Naive thymus-derived CD4-positive, alpha-beta T cell (primary cell): ENCODE measurements at regions of chr1 and their contacts with region 1.

Region 1: GRCh38 chr1:32063261-32063681 is 9.5 kb upstream of the TMEM39B start:
- DNase-seq: peak in 6 of 9 donors; percentile 12 to 46 (median 35)
- ATAC-seq: peak; percentile 60
- H3K4me3 ChIP-seq: no peak overlapping the region
- H3K4me3 Mint-ChIP-seq: no peak overlapping the region
- H3K27ac ChIP-seq: no peak overlapping the region
- H3K27ac Mint-ChIP-seq: peak overlapping the region in 8 of 9 donors; percentile 8 to 79 (median 68)
- H3K4me1 ChIP-seq: peaks cover 4 to 5% of the 10 kb centered on the region in 2 donors
- H3K4me1 Mint-ChIP-seq: peaks cover 10 to 19% (median 12%) of the 10 kb centered on the region in 7 donors
- H3K27me3 ChIP-seq: no peaks in the 10 kb centered on the region
- H3K27me3 Mint-ChIP-seq: no peaks in the 10 kb centered on the region

Region 2: GRCh38 chr1:31715087-31715872 is 348.0 kb before region 1 on chr1:
- CTCF ChIA-PET with region 1: no interaction called
- POLR2A ChIA-PET with region 1: no interaction called
- intact Hi-C with region 1: loop called in 1 of 2 experiments (anchors 1 kb)
- DNase-seq: peak in 1 of 9 donors; percentile 45
- ATAC-seq: peak; percentile 66
- H3K4me3 ChIP-seq: peak overlapping the region; percentile 13
- H3K4me3 Mint-ChIP-seq: peak overlapping the region; percentile 42 to 83 (median 73)
- H3K27ac ChIP-seq: no peak overlapping the region
- H3K27ac Mint-ChIP-seq: no peak overlapping the region
- H3K4me1 ChIP-seq: peaks cover 3 to 16% of the 10 kb centered on the region in 2 donors
- H3K4me1 Mint-ChIP-seq: peaks cover 6 to 19% (median 16%) of the 10 kb centered on the region in 7 donors
- H3K27me3 ChIP-seq: peaks cover 2 to 10% of the 10 kb centered on the region in 2 donors
- H3K27me3 Mint-ChIP-seq: peaks cover 59 to 71% (median 64%) of the 10 kb centered on the region in 5 donors

Region 3: DNA sequence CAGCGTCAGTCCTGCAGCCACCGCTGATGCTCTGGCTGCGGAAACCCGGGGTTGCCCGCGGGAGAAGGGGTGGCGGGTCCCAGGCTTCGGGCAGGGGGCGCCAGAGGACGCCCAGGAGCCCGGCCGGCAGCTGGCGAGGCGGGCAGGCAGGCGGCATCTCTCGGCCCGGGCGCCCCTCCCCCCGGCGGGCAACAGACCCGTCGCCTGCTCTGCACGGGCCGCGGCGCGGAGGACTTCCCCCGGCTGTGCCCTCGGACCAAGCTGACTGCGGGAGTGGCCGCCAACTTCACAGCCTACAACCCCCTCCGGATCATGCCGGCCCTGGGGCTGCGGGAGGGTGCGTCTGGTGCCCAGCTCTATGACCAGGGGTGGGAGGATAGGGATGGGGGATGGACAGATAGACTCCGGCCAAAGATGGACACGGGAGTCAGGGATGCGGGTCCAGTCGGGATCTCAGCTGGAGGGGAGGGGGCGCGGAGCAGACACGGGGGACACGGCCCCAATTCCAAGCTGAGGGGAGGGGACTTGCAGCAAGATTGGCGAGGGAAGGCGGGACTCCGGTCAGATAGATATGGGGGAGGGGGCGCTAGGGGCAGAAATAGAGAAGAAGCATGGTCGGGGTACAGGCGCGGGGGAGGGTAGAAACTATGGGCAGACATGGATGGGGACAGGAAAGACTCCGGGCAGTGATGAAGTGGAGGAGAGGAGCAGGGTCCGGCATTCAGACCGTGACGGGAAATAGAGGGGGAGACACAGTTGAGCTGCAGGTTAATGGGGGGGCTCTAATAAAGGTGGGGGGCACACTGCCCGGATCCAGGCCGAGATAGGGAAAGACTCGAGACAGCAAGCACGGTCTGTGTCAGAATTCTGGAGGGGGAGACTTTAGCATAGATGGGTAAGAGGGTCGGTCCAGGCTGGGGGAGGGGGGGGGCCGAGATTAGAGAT is 300.3 kb before region 1 on chr1:
- CTCF ChIA-PET with region 1: interaction called, 3 read pairs
- POLR2A ChIA-PET with region 1: no interaction called
- intact Hi-C with region 1: loop called (anchors 1 kb)
- DNase-seq: peak; percentile 51 to 81 (median 67)
- ATAC-seq: peak; percentile 64
- H3K4me3 ChIP-seq: peak overlapping the region; percentile 48
- H3K4me3 Mint-ChIP-seq: peak overlapping the region; percentile 71 to 89 (median 82)
- H3K27ac ChIP-seq: no peak overlapping the region
- H3K27ac Mint-ChIP-seq: no peak overlapping the region
- H3K4me1 ChIP-seq: peaks cover 23 to 32% of the 10 kb centered on the region in 2 donors
- H3K4me1 Mint-ChIP-seq: peaks cover 6 to 32% (median 26%) of the 10 kb centered on the region in 7 donors
- H3K27me3 ChIP-seq: no peaks in the 10 kb centered on the region
- H3K27me3 Mint-ChIP-seq: peaks cover 0 to 79% (median 4%) of the 10 kb centered on the region in 5 donors

Region 4: GRCh38 chr1:31815752-31816500 is 247.3 kb before region 1 on chr1 and contains the start of gene SPOCD1:
- CTCF ChIA-PET with region 1: interaction called, 10 read pairs
- POLR2A ChIA-PET with region 1: no interaction called
- intact Hi-C with region 1: loop called (anchors 1 to 10 kb)
- DNase-seq: peak; percentile 71 to 86 (median 78)
- ATAC-seq: peak; percentile 98
- H3K4me3 ChIP-seq: no peak within 1 kb of the TSS
- H3K4me3 Mint-ChIP-seq: peak within 1 kb of the TSS in 2 of 10 donors; percentile 18 to 41
- H3K27ac ChIP-seq: no peak within 1 kb of the TSS
- H3K27ac Mint-ChIP-seq: peak within 1 kb of the TSS; percentile 33 to 81 (median 48)
- H3K4me1 ChIP-seq: peaks cover 0 to 7% of the 10 kb centered on the region in 2 donors
- H3K4me1 Mint-ChIP-seq: peaks cover 6 to 24% (median 13%) of the 10 kb centered on the region in 7 donors
- H3K27me3 ChIP-seq: no peaks in the 10 kb centered on the region
- H3K27me3 Mint-ChIP-seq: no peaks in the 10 kb centered on the region
- total RNA-seq, gene SPOCD1: 0.21 to 0.38 TPM in 2 of 5 experiments, not detected in the others

Region 5: DNA sequence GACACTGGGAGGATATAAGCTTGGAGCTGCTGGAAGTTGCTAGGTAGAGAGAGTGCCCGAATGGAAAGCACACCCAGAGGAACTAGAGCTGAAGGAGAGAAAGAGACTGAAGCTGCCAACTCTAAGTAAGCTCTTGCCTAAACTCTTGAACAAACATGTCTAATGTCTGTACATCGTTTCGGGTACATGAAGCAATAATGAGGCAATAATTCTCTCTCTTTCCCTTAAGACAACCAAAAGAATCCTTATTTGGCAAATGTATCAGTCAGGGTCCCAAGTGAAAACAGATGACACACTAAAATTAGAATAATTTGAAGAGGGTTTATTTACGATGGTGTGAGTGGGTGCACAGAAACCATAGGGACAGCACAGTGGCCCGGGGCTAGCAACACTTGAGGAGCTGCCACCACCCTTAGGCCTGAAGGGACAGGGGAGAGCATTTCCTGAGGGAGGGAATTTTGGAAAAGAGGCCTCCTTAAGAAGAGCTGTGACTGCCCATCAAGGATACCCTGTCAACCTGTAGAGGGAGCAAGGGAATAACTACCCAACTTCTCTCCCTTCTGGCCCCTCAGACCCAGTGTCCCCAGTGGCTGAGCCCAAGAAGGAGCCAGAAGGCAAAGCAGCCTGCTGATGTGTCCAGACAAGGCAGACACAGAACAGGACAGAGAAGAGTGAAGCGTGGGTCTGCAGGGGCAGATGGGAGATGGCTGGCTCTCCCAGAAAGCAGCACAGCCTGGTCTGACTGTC is 85.7 kb before region 1 on chr1:
- CTCF ChIA-PET with region 1: interaction called, 7 read pairs
- POLR2A ChIA-PET with region 1: interaction called, 3 read pairs
- intact Hi-C with region 1: loop called in 1 of 2 experiments (anchors 1 kb)
- DNase-seq: no peak
- ATAC-seq: no peak
- H3K4me3 ChIP-seq: no peak overlapping the region
- H3K4me3 Mint-ChIP-seq: peak overlapping the region in 1 of 10 donors; percentile 4
- H3K27ac ChIP-seq: no peak overlapping the region
- H3K27ac Mint-ChIP-seq: peak overlapping the region in 3 of 9 donors; percentile 59 to 76 (median 60)
- H3K4me1 ChIP-seq: peaks cover 13 to 18% of the 10 kb centered on the region in 2 donors
- H3K4me1 Mint-ChIP-seq: peaks cover 19 to 35% (median 31%) of the 10 kb centered on the region in 7 donors
- H3K27me3 ChIP-seq: no peaks in the 10 kb centered on the region
- H3K27me3 Mint-ChIP-seq: no peaks in the 10 kb centered on the region

Region 6: DNA sequence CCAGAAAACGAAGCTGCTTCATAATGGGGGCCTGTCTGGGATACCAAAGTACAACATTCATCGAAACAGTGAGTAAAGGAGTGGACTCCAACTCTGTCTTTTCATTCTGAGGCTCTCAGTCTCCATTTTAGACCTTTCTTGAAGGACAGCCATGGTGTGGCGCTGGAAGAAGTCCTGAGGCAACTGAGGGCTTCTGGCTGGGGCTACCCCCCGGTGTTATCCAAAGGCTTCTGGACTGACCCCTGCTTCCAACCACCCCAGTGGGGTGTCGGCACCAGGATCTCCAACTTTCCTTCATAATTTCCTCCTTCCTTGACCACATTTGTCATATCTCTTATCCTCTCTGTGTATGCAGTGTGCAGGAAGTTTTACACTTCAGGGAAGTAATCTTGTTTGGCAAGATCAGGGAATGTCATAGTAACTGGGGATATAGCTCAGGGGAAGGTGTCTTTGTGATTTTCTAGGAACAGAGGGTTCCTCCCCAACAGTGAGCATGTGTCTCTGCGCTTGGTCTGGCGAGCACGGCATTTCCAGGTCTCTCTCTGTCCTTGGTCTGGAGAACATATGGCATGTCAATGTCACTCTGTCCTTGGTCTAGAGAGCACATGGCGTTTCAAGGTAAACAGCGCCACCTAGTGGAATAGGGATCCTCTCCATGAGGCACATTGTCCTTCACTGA is 350.4 kb after region 1 on chr1:
- CTCF ChIA-PET with region 1: interaction called, 3 read pairs
- POLR2A ChIA-PET with region 1: no interaction called
- intact Hi-C with region 1: loop called in 1 of 2 experiments (anchors 1 kb)
- DNase-seq: peak; percentile 27 to 78 (median 70)
- ATAC-seq: peak; percentile 90
- H3K4me3 ChIP-seq: no peak overlapping the region
- H3K4me3 Mint-ChIP-seq: no peak overlapping the region
- H3K27ac ChIP-seq: no peak overlapping the region
- H3K27ac Mint-ChIP-seq: peak overlapping the region in 3 of 9 donors; percentile 8 to 26 (median 21)
- H3K4me1 ChIP-seq: no peaks in the 10 kb centered on the region
- H3K4me1 Mint-ChIP-seq: peaks cover 0 to 3% (median 0%) of the 10 kb centered on the region in 7 donors
- H3K27me3 ChIP-seq: peaks cover 0 to 6% of the 10 kb centered on the region in 2 donors
- H3K27me3 Mint-ChIP-seq: peaks cover 4 to 40% (median 8%) of the 10 kb centered on the region in 5 donors